AG04450 (cell line): ENCODE measurements at regions of chr3 and their contacts with region 1.

Region 1: GRCh38 chr3:120417272-120417911 is 33.4 kb downstream of the FSTL1 start:
- DNase-seq: peak; percentile 97
- H3K4me3 ChIP-seq: peak overlapping the region; percentile 32
- H3K27ac ChIP-seq: peak overlapping the region; percentile 62
- H3K27me3 ChIP-seq: no peaks in the 10 kb centered on the region
- CTCF ChIP-seq: peak; percentile 76

Region 2: DNA sequence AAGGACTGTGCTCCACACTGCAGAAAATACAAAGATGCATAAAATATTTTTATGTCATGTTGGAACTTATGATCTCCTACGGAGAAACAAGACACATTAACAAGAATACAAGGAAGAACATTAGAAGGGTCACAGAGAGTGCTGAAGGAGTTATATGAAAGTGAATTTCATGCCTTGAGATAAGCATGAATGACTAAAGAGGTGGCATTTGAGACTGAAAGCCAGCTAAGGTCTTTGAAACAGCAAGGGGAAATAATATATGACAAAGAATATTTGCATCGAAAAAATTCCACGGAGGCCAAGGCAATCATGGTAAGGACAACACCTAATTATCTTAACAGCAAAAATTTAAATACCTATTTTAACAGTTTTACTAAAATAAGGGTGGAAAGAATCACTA is 335.7 kb before region 1 on chr3:
- CTCF ChIA-PET with region 1: no interaction called
- POLR2A ChIA-PET with region 1: no interaction called
- DNase-seq: no peak
- H3K4me3 ChIP-seq: no peak overlapping the region
- H3K27ac ChIP-seq: no peak overlapping the region
- H3K27me3 ChIP-seq: no peaks in the 10 kb centered on the region
- CTCF ChIP-seq: no peak

Region 3: DNA sequence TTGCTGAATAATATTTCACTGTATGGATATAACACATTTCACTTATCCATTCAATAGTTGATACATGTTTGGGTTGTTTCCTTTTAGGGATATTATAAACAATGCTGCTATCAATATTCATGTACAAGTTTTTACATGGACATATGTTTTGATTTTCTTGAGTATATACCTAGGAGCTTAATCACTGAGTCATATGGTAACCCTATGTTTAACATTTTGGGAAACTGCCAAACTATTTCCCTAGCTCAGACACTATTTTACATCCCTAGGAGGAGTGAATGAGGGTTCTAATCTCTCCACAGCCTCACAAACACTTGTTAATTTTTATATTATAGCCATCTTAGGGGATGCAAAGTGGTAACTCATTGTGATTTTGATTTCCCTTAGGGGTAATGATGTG is 198.4 kb before region 1 on chr3:
- CTCF ChIA-PET with region 1: no interaction called
- POLR2A ChIA-PET with region 1: no interaction called
- DNase-seq: no peak
- H3K4me3 ChIP-seq: no peak overlapping the region
- H3K27ac ChIP-seq: no peak overlapping the region
- H3K27me3 ChIP-seq: peaks cover 3% of the 10 kb centered on the region
- CTCF ChIP-seq: no peak

Region 4: DNA sequence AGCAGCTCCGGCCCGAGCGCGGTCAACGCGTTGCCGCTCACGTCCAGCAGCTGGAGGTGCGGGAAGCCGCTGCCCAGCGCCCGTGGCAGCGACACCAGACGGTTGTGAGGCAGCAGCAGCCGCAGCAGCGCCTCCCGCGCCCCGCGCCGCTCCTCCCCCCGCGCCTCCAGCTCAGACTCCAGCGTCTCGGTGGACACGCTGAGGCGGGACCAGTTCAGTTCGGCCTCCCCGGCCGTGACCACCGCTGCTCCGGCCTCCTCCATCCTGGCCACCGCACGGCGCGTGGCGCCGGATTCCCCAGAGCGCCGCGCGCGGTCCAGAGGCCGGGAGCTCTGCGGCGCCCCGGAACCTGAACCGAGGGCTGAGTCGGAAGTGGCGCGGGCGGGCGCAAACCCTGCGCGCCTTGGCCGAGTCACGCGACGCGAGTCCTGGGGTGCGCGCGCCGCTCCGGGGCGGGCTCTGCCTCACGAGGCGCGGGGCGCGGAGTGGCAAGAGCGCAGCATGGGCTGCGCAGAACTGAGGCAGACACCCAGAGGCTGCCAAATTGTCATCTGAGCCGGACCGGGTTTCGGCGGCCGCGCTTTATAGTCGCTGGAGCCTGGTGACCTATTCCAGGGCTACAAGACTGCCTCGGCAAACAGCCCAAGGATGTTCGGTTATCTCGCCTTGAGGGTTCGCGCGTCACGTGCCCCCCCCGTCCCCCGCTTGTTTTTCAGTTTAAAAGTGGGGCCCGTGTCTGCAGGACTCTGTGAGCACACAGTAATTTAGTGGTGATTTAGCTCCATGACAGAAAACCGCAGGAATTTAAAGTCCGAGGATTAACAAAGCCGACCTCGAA is 68.2 kb before region 1 on chr3 and contains the start of gene LRRC58:
- CTCF ChIA-PET with region 1: interaction called, 13 read pairs
- POLR2A ChIA-PET with region 1: interaction called, 4 read pairs
- DNase-seq: peak; percentile 74
- H3K4me3 ChIP-seq: peak within 1 kb of the TSS; percentile 84
- H3K27ac ChIP-seq: peak within 1 kb of the TSS; percentile 91
- H3K27me3 ChIP-seq: no peaks in the 10 kb centered on the region
- CTCF ChIP-seq: peak; percentile 33; the same call in 1 of the 2 replicates
- polyA plus RNA-seq, gene LRRC58: 9.9 and 15.0 TPM in 2 replicates

Region 5: DNA sequence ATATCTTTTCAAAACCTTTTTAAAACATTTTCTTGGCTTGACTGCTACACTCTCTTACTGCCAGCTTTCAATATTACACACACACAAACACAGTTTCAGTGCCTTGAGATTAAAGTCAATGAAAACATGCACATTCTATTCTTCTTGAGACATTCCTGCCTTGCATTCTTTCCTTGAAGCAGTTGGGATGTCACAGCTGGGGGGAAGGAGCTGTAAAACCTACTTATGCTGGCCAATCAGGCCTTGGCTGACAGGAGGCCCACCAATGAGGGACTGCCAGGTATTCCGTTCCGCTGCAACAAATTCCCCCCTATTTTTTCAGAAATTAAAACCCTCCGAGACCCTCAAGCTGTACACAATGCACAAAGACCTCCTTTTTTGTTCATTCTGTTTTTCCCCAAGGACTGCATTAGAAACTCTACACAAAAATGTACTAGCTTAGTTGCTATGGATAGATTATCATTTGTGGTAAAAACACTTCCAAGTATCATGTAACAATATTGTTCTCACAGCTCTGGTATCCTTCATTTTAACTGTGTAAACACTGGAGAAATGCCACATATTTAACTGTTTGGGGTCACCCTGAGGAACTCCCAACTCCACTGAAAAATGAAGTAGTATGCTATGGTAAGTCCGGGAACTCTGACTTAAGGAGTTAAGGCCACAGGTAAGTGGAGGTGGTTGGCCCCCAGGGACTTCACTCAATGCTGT is 14.9 kb after region 1 on chr3:
- CTCF ChIA-PET with region 1: interaction called, 24 read pairs
- POLR2A ChIA-PET with region 1: interaction called, 7 read pairs
- DNase-seq: peak; percentile 77
- H3K4me3 ChIP-seq: no peak overlapping the region
- H3K27ac ChIP-seq: peak overlapping the region; percentile 77
- H3K27me3 ChIP-seq: no peaks in the 10 kb centered on the region
- CTCF ChIP-seq: no peak

Region 6: DNA sequence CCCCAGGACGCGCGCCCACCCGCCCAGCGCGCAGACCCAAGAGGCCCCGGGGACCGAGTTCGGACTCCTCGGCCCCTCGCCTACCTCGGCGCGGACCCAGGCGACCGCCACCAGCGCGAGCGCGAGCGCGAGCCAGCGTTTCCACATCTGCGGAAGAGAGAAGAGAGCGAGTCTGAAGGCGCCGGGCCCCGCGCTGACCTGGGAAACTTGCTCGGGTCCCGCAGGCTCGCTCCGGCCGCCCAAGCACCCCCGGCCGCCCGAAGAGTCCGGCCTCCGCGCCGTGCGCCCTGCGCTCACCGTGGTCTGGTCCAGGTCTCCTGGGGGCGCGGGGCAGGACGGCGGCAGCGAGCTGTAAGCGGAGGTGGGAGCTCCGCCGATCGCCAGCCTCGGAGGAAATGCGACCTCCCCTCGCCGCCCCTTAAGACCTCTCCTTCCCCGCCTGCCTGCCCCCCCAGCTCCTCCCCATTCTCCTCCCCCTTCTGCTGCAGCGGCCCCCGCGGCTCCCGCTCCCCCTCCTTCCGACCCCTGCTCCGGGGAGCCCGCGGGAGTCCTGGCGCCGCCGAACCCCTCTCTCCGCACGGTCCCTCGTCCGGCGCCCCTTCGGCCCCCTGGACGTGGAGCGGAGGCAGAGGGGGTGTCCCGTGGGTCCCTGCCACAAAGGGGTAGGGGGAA is 33.3 kb after region 1 on chr3 and contains the start of gene FSTL1:
- CTCF ChIA-PET with region 1: interaction called, 42 read pairs
- POLR2A ChIA-PET with region 1: interaction called, 21 read pairs
- DNase-seq: no peak
- H3K4me3 ChIP-seq: peak within 1 kb of the TSS; percentile 84
- H3K27ac ChIP-seq: peak within 1 kb of the TSS; percentile 95
- H3K27me3 ChIP-seq: no peaks in the 10 kb centered on the region
- CTCF ChIP-seq: no peak
- polyA plus RNA-seq, gene FSTL1: 1,126 and 1,300 TPM in 2 replicates